ENCODE measurements at regions of chr11 and their contacts with region 1.

Region 1: DNA sequence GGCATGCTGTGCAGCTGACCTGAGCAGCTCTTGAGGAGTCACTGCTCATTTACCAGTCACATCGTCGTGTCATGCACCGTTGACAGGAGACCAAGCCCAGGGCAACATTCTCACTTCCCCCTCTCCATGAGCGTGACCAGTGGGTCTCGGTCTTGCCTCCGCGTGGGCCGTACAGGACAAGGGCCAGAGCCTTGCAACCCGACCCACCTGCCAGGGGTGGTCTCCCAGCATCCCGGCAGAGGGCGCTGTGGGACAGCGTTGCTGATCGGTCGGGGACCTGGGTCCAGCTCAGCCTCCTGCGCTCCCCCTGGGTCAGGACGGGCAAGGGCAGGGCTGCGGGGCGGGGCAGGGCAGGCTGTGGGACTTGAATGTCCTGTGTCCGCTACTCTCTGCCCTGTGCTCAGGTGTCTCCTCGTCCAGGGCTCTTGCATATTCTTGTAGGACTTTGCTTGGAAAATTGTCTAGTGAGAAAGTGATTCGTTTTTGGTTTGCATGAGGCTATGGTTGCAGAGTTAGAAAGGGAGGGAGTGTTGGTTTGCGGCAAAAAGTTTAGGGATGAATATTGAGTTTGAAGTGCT is 16.2 kb downstream of the EIF4G2 start:
- DNase-seq: peak; percentile 98
- ATAC-seq: peak; percentile 93
- H3K4me3 Mint-ChIP-seq: peak overlapping the region; percentile 27; the same call in 1 of the 2 replicates
- H3K27ac Mint-ChIP-seq: no peak overlapping the region
- H3K4me1 Mint-ChIP-seq: peaks cover 4% of the 10 kb centered on the region
- H3K27me3 Mint-ChIP-seq: peaks cover 3% of the 10 kb centered on the region; the same call in 1 of the 2 replicates
- CTCF ChIP-seq: peak; percentile 94

Region 2: DNA sequence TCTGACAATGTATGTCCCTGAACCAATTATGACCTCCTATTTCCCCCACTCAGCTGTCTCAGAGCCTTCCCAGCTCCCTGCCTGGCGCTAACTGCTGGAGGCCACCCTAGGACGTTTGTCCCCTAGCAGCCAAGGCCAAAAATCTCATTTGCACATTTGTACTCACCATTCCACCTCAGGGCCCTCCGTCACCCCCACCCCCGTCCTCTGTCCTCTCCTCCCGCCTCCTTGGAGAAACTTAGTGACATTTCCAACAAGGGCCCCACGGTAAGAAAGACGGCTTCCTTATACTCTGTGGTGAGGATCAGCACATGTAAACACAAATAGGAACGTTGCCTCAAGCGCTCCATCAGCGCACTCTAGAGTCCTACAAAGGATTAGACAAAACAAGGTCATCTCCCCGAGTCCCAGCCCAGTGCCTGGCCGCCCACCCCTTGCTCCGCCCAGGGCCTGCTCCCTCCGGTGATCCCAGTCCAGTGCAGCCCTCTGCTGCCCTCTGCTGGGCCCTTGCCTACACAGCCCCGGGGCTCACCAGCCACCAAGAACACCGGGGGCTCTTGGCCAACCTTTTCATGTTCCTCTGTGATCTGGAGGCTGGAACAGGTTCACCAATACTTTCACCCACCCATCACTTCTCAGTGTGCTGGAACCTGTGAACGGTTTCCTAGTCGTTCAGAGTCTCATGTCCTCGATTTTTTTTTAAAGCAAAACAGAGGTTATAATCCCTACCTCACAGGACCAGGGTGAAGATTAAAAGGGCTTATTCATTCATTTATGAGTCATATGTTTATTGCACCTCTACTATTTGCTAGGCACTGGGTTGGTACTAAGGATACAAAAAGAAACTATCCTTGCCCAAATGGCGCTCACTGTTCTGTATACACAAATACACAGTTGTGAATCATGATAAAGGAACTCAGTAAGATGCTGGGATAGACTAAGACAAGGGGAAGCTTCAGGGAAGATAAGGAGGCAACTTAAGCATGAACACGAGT is 56.7 kb before region 1 on chr11:
- CTCF ChIA-PET with region 1: no interaction called
- POLR2A ChIA-PET with region 1: no interaction called
- DNase-seq: peak; percentile 96
- ATAC-seq: peak; percentile 100
- H3K4me3 Mint-ChIP-seq: peak overlapping the region; percentile 54
- H3K27ac Mint-ChIP-seq: no peak overlapping the region
- H3K4me1 Mint-ChIP-seq: peaks cover 6% of the 10 kb centered on the region
- H3K27me3 Mint-ChIP-seq: no peaks in the 10 kb centered on the region
- CTCF ChIP-seq: peak; percentile 94

Region 3: GRCh38 chr11:10779086-10779485 is 13.4 kb before region 1 on chr11:
- CTCF ChIA-PET with region 1: interaction called, 11 read pairs
- POLR2A ChIA-PET with region 1: no interaction called
- DNase-seq: no peak
- ATAC-seq: no peak
- H3K4me3 Mint-ChIP-seq: no peak overlapping the region
- H3K27ac Mint-ChIP-seq: no peak overlapping the region
- H3K4me1 Mint-ChIP-seq: no peaks in the 10 kb centered on the region
- H3K27me3 Mint-ChIP-seq: no peaks in the 10 kb centered on the region; the same call in 1 of the 2 replicates
- CTCF ChIP-seq: no peak

Region 4: DNA sequence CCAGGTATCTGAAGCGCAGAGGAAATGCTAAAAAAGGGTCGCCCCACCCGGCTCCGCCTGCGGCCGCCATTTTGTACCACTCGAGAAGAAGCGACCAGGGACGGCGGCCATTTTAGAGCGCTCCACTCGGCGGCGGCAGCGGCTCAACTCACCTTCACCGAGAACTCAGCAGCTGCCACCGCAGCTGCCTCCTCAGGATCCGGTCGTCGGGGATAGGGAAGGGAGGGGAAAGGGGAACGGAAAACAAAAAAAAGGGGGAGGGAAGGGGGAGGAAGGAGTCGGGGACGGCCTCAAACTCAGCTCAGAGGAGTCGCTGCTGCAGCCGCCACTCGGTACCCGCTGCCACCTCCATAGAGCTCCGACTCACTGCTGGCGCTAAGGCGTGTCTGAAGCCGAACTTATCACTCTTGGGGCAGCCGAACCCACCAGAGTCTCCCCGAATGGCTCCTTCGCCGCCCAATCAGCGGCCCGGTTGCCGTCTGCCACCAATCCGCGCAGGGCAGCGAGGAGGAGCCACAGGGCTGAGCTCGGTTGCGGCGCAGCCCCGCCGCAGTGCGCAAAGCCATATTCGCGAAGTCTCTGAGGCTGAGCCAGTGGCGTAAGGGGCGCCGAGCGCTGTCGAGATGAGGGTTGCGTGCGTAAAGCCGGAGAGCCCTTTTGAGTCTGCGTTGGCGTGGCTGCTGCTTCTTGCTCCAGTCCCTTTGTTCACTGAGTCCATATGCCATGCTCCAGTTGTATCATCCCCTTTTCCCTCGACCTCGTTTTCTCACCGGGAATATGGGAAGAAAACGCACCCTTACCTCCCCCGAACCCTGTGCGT is 16.3 kb after region 1 on chr11 and contains the start of gene EIF4G2:
- CTCF ChIA-PET with region 1: interaction called, 29 read pairs
- POLR2A ChIA-PET with region 1: interaction called, 27 read pairs
- DNase-seq: peak; percentile 97
- ATAC-seq: peak; percentile 95
- H3K4me3 Mint-ChIP-seq: peak within 1 kb of the TSS; percentile 90
- H3K27ac Mint-ChIP-seq: peak within 1 kb of the TSS; percentile 98
- H3K4me1 Mint-ChIP-seq: peaks cover 28% of the 10 kb centered on the region
- H3K27me3 Mint-ChIP-seq: no peaks in the 10 kb centered on the region
- CTCF ChIP-seq: no peak
- total RNA-seq, gene EIF4G2: 779 to 918 TPM (median 906 TPM) in 3 replicates

Region 5: DNA sequence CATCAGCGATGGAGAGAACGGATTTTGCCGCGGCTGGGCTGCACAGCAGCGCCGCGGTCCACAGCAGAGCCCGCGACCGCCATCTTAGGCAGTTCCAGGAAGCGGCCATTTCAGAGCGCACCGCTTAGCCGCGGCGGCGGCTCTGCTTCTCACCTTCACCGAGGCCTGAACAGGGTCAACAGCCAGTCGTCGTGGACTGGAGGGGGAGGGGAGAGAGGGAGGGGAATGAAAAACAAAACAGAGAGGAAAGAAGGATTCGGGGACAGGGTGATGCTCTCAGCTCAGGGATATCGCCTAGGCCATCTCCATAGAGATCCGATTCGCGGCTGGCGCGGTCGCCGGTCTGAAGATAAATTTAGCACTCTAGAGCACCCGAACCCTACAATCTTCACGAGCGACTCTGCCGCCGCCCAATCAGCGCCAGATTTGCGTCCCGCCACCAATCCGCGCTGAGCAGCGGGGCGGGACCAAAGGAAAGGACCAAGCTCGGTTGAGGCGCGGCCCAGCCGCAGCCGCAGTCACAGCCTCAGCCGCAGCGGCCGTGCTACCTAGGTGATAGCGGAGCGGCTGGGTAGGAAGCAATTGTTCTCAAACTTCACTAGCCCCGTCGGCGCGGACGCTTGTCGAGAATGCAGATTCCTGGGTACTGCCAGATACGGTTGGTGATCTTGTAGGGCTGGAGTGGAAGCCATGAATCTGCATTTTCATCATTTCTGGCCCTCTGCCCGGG is 65.4 kb after region 1 on chr11 and contains the start of gene ZBED5:
- CTCF ChIA-PET with region 1: interaction called, 17 read pairs
- POLR2A ChIA-PET with region 1: interaction called, 4 read pairs
- DNase-seq: peak; percentile 96
- ATAC-seq: peak; percentile 96
- H3K4me3 Mint-ChIP-seq: peak within 1 kb of the TSS; percentile 100
- H3K27ac Mint-ChIP-seq: peak within 1 kb of the TSS; percentile 100
- H3K4me1 Mint-ChIP-seq: peaks cover 30% of the 10 kb centered on the region
- H3K27me3 Mint-ChIP-seq: no peaks in the 10 kb centered on the region
- CTCF ChIP-seq: no peak
- total RNA-seq, gene ZBED5: 44.9 to 49.5 TPM (median 48.7 TPM) in 3 replicates

Region 6: GRCh38 chr11:10925144-10925926 is 132.8 kb after region 1 on chr11:
- CTCF ChIA-PET with region 1: interaction called, 11 read pairs
- POLR2A ChIA-PET with region 1: no interaction called
- DNase-seq: no peak
- ATAC-seq: peak; percentile 55
- H3K4me3 Mint-ChIP-seq: no peak overlapping the region
- H3K27ac Mint-ChIP-seq: no peak overlapping the region
- H3K4me1 Mint-ChIP-seq: peaks cover 14% of the 10 kb centered on the region
- H3K27me3 Mint-ChIP-seq: peaks cover 20% of the 10 kb centered on the region
- CTCF ChIP-seq: no peak

Region 7: DNA sequence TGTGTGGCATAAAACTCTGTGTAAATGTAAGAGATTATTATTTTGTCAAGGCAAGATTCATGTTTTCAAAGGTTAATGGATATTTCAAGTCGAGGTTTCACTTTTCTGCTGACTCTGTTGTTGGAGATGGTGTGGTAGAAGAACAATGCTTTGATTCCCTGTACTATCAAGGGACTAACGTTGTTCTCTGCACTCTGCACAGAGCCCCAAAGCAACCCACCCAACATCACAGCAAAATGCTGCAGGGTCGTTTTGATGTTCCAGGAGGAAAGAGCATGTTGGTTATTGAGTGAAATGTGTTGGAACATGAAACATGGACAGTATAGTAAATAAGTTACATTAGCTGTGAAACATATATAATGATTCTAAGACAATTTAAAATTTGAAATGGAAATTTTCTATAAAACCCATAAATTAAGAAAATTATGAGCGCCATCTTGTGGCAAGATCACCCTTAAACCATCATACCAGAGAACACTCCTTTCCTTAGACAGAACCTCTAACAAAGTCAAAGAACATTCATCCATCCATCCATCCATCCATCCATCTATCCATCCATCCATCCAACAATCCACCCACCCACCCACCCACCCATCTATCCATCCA is 229.7 kb after region 1 on chr11:
- CTCF ChIA-PET with region 1: interaction called, 24 read pairs
- POLR2A ChIA-PET with region 1: no interaction called
- DNase-seq: no peak
- ATAC-seq: peak; percentile 47; the same call in 1 of the 2 replicates
- H3K4me3 Mint-ChIP-seq: no peak overlapping the region
- H3K27ac Mint-ChIP-seq: no peak overlapping the region
- H3K4me1 Mint-ChIP-seq: peaks cover 12% of the 10 kb centered on the region
- H3K27me3 Mint-ChIP-seq: no peaks in the 10 kb centered on the region
- CTCF ChIP-seq: no peak